B cell (primary cell): ENCODE measurements at regions of chr1 and their contacts with region 1.

Region 1: DNA sequence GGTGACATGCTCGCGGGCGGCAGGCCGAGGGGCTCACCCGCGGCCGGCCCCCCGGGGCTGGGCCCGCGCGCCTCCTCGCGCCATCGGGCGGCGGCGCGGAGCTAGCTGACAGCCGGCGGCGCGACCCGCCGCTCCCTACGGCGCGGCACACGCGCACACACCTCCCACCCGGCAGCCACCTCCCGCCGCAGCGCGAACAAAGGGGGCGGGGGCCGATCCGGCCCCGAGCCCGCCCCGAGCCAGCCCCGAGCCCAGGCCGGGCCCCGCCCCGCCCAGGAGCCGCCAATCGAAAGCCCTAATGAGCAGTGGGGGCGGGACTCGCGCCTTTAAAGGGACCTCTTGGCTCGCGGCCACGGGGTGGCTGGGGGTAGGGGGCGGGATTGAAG is at the start of gene KIF21B:
- DNase-seq: peak; percentile 92
- ATAC-seq: peak; percentile 83
- H3K4me3 ChIP-seq: peak within 1 kb of the TSS; percentile 53 to 83 (median 72)
- H3K4me3 Mint-ChIP-seq: peak within 1 kb of the TSS; percentile 97
- H3K27ac ChIP-seq: peak within 1 kb of the TSS; percentile 90 to 95
- H3K27ac Mint-ChIP-seq: peak within 1 kb of the TSS; percentile 98
- H3K4me1 ChIP-seq: peaks cover 69 to 79% of the 10 kb centered on the region in 2 donors
- H3K4me1 Mint-ChIP-seq: peaks cover 77% of the 10 kb centered on the region
- H3K27me3 ChIP-seq: no peaks in the 10 kb centered on the region
- H3K27me3 Mint-ChIP-seq: no peaks in the 10 kb centered on the region
- CTCF ChIP-seq: no peak
- total RNA-seq, gene KIF21B: 41.6 and 42.0 TPM in 2 replicates

Region 2: GRCh38 chr1:200302192-200302920 is 721.2 kb before region 1 on chr1:
- CTCF ChIA-PET with region 1: no interaction called
- POLR2A ChIA-PET with region 1: no interaction called
- intact Hi-C with region 1: loop called (anchors 10 kb)
- DNase-seq: peak; percentile 82
- ATAC-seq: peak; percentile 79
- H3K4me3 ChIP-seq: peak overlapping the region; percentile 60 to 96 (median 88)
- H3K4me3 Mint-ChIP-seq: peak overlapping the region; percentile 93
- H3K27ac ChIP-seq: peak overlapping the region; percentile 60 to 61
- H3K27ac Mint-ChIP-seq: peak overlapping the region; percentile 89
- H3K4me1 ChIP-seq: peaks cover 44 to 47% of the 10 kb centered on the region in 2 donors
- H3K4me1 Mint-ChIP-seq: peaks cover 40% of the 10 kb centered on the region
- H3K27me3 ChIP-seq: no peaks in the 10 kb centered on the region
- H3K27me3 Mint-ChIP-seq: no peaks in the 10 kb centered on the region
- CTCF ChIP-seq: peak; percentile 35

Region 3: DNA sequence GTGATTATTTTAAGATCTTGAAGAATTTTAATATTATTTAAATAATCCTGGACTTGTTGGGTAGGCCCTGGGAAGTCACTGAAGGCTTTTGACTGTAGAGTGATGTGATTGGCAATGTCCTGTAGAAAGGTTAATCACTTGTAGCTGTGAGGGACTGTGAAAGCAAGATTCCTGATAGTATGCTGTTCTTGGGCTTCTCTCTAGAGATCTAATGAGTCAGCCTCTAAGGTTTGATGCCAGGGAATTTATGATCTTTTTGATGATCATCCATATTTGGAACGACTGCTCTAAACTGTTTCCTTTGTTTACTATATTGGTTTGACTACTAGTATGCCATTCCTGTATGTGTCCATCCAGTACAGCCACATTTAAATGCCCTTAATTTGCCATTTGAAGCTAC is 228.4 kb before region 1 on chr1:
- CTCF ChIA-PET with region 1: no interaction called
- POLR2A ChIA-PET with region 1: no interaction called
- intact Hi-C with region 1: no loop called
- DNase-seq: no peak
- ATAC-seq: no peak
- H3K4me3 ChIP-seq: no peak overlapping the region
- H3K4me3 Mint-ChIP-seq: no peak overlapping the region
- H3K27ac ChIP-seq: no peak overlapping the region
- H3K27ac Mint-ChIP-seq: no peak overlapping the region
- H3K4me1 ChIP-seq: no peaks in the 10 kb centered on the region
- H3K4me1 Mint-ChIP-seq: no peaks in the 10 kb centered on the region
- H3K27me3 ChIP-seq: no peaks in the 10 kb centered on the region
- H3K27me3 Mint-ChIP-seq: peaks cover 3% of the 10 kb centered on the region
- CTCF ChIP-seq: no peak

Region 4: GRCh38 chr1:200888349-200888838 is 135.1 kb before region 1 on chr1:
- CTCF ChIA-PET with region 1: no interaction called
- POLR2A ChIA-PET with region 1: no interaction called
- intact Hi-C with region 1: loop called (anchors 10 kb)
- DNase-seq: peak; percentile 69
- ATAC-seq: peak; percentile 94
- H3K4me3 ChIP-seq: peak overlapping the region in 2 of 5 experiments; percentile 6 to 23
- H3K4me3 Mint-ChIP-seq: peak overlapping the region; percentile 59
- H3K27ac ChIP-seq: peak overlapping the region in 1 of 2 donors; percentile 4
- H3K27ac Mint-ChIP-seq: peak overlapping the region; percentile 63
- H3K4me1 ChIP-seq: peaks cover 42 to 51% of the 10 kb centered on the region in 2 donors
- H3K4me1 Mint-ChIP-seq: peaks cover 52% of the 10 kb centered on the region
- H3K27me3 ChIP-seq: peaks cover 0 to 30% (median 12%) of the 10 kb centered on the region in 4 experiments
- H3K27me3 Mint-ChIP-seq: peaks cover 19% of the 10 kb centered on the region
- CTCF ChIP-seq: no peak

Region 5: GRCh38 chr1:200979574-200980451 is 43.7 kb before region 1 on chr1:
- CTCF ChIA-PET with region 1: interaction called, 58 read pairs
- POLR2A ChIA-PET with region 1: interaction called, 3 read pairs
- intact Hi-C with region 1: no loop called
- DNase-seq: peak; percentile 68
- ATAC-seq: peak; percentile 54
- H3K4me3 ChIP-seq: no peak overlapping the region
- H3K4me3 Mint-ChIP-seq: no peak overlapping the region
- H3K27ac ChIP-seq: no peak overlapping the region
- H3K27ac Mint-ChIP-seq: no peak overlapping the region
- H3K4me1 ChIP-seq: no peaks in the 10 kb centered on the region
- H3K4me1 Mint-ChIP-seq: no peaks in the 10 kb centered on the region
- H3K27me3 ChIP-seq: no peaks in the 10 kb centered on the region
- H3K27me3 Mint-ChIP-seq: no peaks in the 10 kb centered on the region
- CTCF ChIP-seq: peak; percentile 80

Region 6: GRCh38 chr1:201154389-201155165 is 131.1 kb after region 1 on chr1 and contains the start of gene TMEM9:
- CTCF ChIA-PET with region 1: no interaction called
- POLR2A ChIA-PET with region 1: no interaction called
- intact Hi-C with region 1: loop called (anchors 1 kb)
- DNase-seq: peak; percentile 96
- ATAC-seq: peak; percentile 98
- H3K4me3 ChIP-seq: peak within 1 kb of the TSS; percentile 19 to 81 (median 71)
- H3K4me3 Mint-ChIP-seq: peak within 1 kb of the TSS; percentile 90
- H3K27ac ChIP-seq: peak within 1 kb of the TSS in 1 of 2 donors; percentile 52
- H3K27ac Mint-ChIP-seq: peak within 1 kb of the TSS; percentile 86
- H3K4me1 ChIP-seq: peaks cover 9 to 17% of the 10 kb centered on the region in 2 donors
- H3K4me1 Mint-ChIP-seq: peaks cover 18% of the 10 kb centered on the region
- H3K27me3 ChIP-seq: peaks cover 0 to 16% (median 4%) of the 10 kb centered on the region in 4 experiments
- H3K27me3 Mint-ChIP-seq: peaks cover 14% of the 10 kb centered on the region
- CTCF ChIP-seq: no peak
- total RNA-seq, gene TMEM9: 28.9 and 29.2 TPM in 2 replicates